ENCODE measurements at regions of chr5 and their contacts with region 1.

Region 1: GRCh38 chr5:39547553-39548154 is 122.9 kb upstream of the DAB2 start:
- DNase-seq: peak; percentile 33
- H3K4me3 ChIP-seq: no peak overlapping the region
- H3K27ac ChIP-seq: no peak overlapping the region
- H3K27me3 ChIP-seq: no peaks in the 10 kb centered on the region
- CTCF ChIP-seq: peak; percentile 77

Region 2: GRCh38 chr5:39256477-39257235 is 291.0 kb before region 1 on chr5:
- CTCF ChIA-PET with region 1: no interaction called
- POLR2A ChIA-PET with region 1: no interaction called
- DNase-seq: peak; percentile 55
- H3K4me3 ChIP-seq: no peak overlapping the region
- H3K27ac ChIP-seq: no peak overlapping the region
- H3K27me3 ChIP-seq: no peaks in the 10 kb centered on the region
- CTCF ChIP-seq: no peak

Region 3: DNA sequence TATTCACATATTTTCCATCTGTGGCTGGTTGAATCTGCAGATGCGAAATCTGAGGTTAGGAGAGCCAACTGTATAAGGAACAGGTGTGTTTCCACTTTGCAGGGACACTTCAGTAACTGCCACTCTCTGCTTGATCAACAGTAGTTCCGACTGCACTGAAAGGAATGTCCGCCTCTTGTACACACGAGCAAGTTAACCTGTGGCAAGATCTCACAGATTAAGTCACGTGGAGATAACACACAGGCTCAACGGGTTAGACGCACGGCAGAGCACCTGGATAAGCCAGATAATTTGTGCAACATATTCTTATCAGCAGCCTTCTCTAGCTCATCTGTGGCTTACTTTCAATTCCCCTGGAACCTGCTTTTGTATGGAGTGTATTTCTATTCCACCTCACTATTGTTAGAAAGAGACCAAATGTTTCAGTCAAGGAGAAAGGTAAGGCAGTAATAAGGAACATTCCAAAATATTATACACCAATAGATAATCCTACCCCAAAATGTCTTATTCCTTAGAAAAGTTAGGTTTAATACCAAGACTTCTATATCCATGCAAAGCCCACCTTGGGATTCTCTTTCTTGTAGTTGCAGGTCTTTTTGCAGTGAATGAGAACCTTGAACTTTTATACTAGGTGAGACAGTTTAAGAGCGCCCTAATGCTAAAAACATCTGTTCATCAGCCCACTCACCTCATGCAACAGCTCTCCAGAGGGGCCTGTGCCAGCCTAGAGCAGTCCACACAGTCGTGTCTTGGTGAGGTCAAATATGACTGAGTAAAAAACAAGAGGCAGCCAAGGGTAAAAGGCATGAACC is 176.9 kb before region 1 on chr5:
- CTCF ChIA-PET with region 1: interaction called, 124 read pairs
- POLR2A ChIA-PET with region 1: interaction called, 3 read pairs
- DNase-seq: no peak
- H3K4me3 ChIP-seq: no peak overlapping the region
- H3K27ac ChIP-seq: no peak overlapping the region
- H3K27me3 ChIP-seq: no peaks in the 10 kb centered on the region
- CTCF ChIP-seq: no peak; the same call in 1 of the 2 replicates

Region 4: DNA sequence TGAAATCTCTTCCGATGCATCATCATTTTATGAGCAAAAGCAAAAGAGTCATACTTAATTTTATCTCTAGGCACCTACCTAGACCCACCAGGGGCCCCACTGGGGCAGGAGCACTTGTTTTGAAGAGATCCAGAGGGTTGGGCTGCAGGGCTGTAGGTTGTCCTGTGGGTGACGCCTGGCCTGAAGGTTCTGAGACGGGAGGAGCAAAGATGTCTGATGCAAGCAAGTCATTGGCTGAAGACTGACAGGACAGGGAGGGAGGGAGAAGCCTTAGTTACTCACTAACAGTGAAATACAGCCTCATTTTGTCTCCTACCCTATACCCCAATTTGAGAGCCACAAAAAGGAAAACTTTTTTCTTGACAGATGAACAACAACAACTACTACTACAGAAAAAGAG is 166.3 kb before region 1 on chr5:
- CTCF ChIA-PET with region 1: interaction called, 124 read pairs
- POLR2A ChIA-PET with region 1: interaction called, 3 read pairs
- DNase-seq: no peak
- H3K4me3 ChIP-seq: no peak overlapping the region
- H3K27ac ChIP-seq: no peak overlapping the region
- H3K27me3 ChIP-seq: no peaks in the 10 kb centered on the region
- CTCF ChIP-seq: no peak

Region 5: GRCh38 chr5:39411051-39411450 is 136.6 kb before region 1 on chr5:
- CTCF ChIA-PET with region 1: interaction called, 10 read pairs
- POLR2A ChIA-PET with region 1: interaction called, 9 read pairs
- DNase-seq: no peak
- H3K4me3 ChIP-seq: no peak overlapping the region
- H3K27ac ChIP-seq: peak overlapping the region; percentile 58
- H3K27me3 ChIP-seq: no peaks in the 10 kb centered on the region
- CTCF ChIP-seq: no peak

Region 6: DNA sequence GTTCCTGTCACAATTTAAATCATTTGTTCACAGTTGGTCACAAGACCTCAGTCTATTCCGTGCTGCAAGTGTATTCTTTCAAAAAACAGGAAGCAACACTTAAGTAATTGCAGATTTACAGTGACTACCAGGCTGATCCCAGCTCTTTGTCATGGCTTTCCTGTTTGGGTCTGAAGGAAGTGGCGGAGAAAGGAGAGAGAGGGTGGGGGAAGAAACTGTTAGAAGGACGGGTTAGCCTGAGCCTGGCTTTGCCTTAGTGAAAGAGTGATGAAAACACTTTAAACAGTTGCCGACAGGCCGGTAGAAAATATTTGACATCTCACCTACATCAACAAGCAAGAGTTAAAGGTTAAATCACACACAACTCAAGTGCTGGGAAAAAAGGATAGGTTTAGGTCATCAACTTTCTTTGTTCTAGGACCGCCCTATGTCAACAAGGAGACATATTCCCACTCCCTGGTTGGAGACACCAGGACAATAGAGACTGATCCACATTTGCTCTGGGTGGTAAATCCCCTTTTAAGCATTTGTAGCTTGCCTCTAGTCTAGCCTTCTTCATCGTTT is 20.7 kb before region 1 on chr5:
- CTCF ChIA-PET with region 1: interaction called, 12 read pairs
- POLR2A ChIA-PET with region 1: no interaction called
- DNase-seq: no peak
- H3K4me3 ChIP-seq: no peak overlapping the region
- H3K27ac ChIP-seq: no peak overlapping the region
- H3K27me3 ChIP-seq: no peaks in the 10 kb centered on the region
- CTCF ChIP-seq: no peak

Measured in AG04450 (cell line).